K562 (cell line): ENCODE measurements at regions of chr7 and their contacts with region 1.

Region 1: DNA sequence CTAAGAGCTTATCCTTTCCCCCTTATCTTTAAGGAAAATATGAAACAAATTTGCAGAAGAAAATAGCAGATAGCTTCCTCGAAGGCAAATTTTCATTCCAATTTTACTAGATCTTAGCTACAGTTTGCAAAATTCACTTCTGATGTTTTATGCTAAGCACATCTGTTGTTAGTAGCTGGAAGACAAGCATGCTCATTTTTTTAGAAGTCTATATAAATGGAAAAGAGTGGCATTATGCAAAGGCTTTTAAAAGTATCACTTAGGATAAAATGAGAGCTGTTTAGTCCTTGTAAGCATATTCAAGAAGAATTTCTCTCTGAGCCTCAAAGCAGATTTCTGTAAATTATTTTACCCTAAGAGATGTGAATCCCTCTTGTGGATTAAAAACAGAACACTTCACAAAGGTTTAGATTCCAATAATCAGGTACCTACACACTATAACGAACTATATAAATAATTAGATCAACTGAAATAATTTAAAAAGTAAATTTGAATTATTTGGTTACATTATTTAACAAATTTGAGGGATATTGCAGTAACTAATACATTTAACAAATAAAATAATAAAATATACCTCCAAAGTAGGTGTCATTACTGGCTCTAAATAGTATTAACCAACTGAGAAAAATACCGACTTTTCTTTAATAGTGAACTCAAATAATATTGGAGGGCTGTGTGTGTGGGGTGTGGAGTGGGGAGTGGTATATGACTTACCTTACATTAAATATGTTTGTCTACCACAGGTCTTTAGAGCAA is 307.1 kb downstream of the SEMA3D start:
- DNase-seq: peak in 1 of 4 experiments; percentile 23
- ATAC-seq: peak; percentile 44
- H3K4me3 ChIP-seq: peak overlapping the region; percentile 77
- H3K27ac ChIP-seq: peak overlapping the region; percentile 85
- H3K4me1 ChIP-seq: peaks cover 2 to 8% of the 10 kb centered on the region in 2 experiments; a peak in 2 of 5 replicates
- H3K27me3 ChIP-seq: no peaks in the 10 kb centered on the region
- CTCF ChIP-seq: no peak
- EP300 ChIP-seq: no peak
- POLR2A ChIP-seq: no peak
- RAD21 ChIP-seq: 0 out of 4 replicates have a peak, but pooled peaks of 1 of the 2 experiments have one; percentile 2

Region 2: DNA sequence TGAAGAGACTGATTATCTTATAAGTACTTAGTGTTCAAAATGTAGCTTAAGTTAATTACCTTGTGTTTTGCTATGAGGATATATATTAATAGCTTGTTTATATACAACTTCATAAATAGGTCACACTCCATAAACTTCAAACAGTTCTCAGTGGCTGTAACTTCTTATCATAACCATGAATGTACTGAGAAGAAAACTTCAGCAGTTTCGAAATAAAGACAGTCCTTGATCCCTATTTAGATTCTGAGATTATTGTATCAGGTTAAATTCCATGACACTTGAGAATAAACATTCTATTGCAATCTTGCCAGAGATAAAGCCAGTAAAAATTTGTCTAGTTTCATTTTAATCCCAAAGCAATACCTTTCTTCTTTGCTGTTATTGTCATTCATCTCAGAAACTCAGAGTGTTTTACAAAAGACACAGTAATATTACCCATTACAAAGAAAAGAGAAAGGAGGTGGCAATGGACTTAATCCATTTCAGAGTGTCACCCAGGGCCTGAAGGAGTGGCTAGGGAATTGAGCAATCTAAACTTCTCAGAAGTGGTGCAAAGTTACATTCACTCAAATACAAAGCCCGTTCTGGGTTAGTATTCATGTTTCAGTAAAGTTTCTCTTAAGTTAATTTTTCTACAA is 96.5 kb before region 1 on chr7:
- CTCF ChIA-PET with region 1: no interaction called
- POLR2A ChIA-PET with region 1: no interaction called
- in situ Hi-C with region 1: no loop called
- intact Hi-C with region 1: loop called (anchors 5 kb)
- DNase-seq: peak in 2 of 4 experiments; percentile 24 to 28
- ATAC-seq: peak; percentile 52
- H3K4me3 ChIP-seq: no peak overlapping the region
- H3K27ac ChIP-seq: peak overlapping the region; percentile 43; the same call in 1 of the 3 replicates
- H3K4me1 ChIP-seq: peaks cover 13 to 17% of the 10 kb centered on the region in 2 experiments; a peak in 4 of 5 replicates
- H3K27me3 ChIP-seq: no peaks in the 10 kb centered on the region
- CTCF ChIP-seq: no peak
- EP300 ChIP-seq: no peak
- POLR2A ChIP-seq: no peak
- RAD21 ChIP-seq: no peak

Region 3: DNA sequence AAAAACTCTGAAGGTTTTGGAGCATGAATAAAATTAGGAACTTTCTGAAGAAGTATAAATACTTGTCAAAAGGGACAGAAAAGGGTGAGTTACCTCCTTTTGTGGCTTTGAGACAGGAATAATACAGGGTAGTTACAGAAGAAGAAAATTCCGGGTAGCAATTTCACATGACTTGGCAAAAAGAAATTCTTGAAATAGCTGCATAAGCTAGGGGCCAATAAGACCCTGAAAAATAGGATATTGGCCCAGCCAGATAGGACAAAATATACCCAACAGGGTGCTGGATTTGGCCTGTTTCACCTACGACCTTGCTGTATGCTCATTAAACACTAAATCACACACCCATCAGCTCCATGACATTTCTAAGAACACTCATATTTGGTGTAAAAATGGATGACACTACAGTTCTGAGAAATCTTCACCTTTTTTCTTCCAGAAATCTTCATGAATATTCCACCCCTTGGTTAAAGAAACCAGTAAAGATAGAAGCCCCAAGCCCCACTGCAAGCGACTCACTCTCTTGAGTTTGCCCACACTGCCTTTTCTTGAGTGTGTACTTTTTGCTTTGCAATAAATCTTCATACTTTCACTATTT is 55.6 kb before region 1 on chr7:
- CTCF ChIA-PET with region 1: no interaction called
- POLR2A ChIA-PET with region 1: no interaction called
- in situ Hi-C with region 1: no loop called
- intact Hi-C with region 1: loop called (anchors 2 kb)
- DNase-seq: peak in 2 of 4 experiments; percentile 72 to 83
- ATAC-seq: peak; percentile 68
- H3K4me3 ChIP-seq: no peak overlapping the region
- H3K27ac ChIP-seq: peak overlapping the region; percentile 76
- H3K4me1 ChIP-seq: peaks cover 12 to 52% of the 10 kb centered on the region in 2 experiments
- H3K27me3 ChIP-seq: no peaks in the 10 kb centered on the region
- CTCF ChIP-seq: no peak
- EP300 ChIP-seq: peak; percentile 70; the same call in 1 of the 2 replicates
- POLR2A ChIP-seq: no peak
- RAD21 ChIP-seq: no peak